ENCODE measurements at regions of chr14 and their contacts with region 1.

Region 1: DNA sequence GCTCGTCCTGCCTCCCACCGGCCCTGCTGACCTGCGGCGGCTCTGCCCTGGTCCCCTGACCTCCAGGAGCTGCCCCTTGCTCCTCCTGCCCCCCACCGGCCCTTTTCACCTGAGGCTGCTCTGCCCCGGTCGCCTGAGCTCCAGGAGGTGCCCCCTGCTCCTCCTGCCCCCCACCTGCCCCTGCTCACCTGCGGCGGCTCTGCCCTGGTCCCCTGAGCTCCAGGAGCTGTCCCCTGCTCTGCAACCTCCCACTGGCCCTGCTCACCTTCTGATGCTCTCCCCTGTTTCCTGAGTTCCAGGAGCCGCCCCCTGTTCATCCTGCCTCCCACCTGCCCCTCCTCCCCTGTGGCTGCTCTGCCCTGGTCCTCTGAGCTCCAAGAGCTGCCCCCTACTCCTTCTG is 101.3 kb downstream of the TMEM121 start:
- DNase-seq: peak in 1 of 14 experiments; percentile 6
- ATAC-seq: no peak
- H3K4me3 ChIP-seq: no peak overlapping the region
- H3K4me3 Mint-ChIP-seq: no peak overlapping the region
- H3K27ac ChIP-seq: no peak overlapping the region
- H3K27ac Mint-ChIP-seq: no peak overlapping the region
- H3K4me1 ChIP-seq: no peaks in the 10 kb centered on the region
- H3K4me1 Mint-ChIP-seq: no peaks in the 10 kb centered on the region
- H3K27me3 ChIP-seq: peaks cover 0 to 9% of the 10 kb centered on the region in 2 experiments
- H3K27me3 Mint-ChIP-seq: peaks cover 20% of the 10 kb centered on the region
- CTCF ChIP-seq: no peak

Region 2: DNA sequence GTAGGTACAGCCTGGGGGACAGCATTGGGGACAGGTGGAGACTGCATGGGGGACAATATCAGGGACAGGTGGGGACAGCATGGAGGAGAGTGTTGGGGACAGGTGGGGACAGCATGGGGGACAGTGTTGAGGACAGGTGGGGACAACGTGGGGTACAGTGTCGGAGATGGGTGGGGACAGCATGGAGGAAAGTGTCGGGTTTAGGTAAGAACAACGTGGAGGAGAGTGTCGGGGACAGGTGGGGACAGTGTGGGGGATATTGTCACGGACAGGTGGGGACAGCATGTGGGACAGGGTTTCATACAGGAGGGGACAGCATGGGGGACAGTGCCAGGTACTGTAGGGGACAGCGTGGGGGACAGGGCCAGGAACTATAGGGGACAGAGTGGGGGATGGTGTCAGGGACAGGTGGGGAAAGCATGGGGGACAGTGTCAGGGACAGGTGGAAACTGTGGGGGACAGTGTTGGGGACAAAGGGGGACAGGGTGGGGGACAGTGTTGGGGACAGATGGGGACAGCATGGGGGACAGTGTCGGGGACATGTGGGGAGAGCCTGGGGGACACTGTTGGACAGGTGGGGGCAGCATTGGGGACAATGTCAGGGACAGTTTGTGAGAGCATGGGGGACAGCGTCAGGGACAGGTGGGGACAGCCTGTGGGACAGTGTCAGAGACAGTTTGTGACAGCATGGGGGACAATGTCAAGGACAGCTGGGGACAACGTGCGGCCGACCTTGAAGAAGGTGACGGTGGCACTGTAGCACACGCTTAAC is 111.8 kb after region 1 on chr14:
- CTCF ChIA-PET with region 1: no interaction called
- POLR2A ChIA-PET with region 1: no interaction called
- intact Hi-C with region 1: loop called in 1 of 2 experiments (anchors 5 kb)
- DNase-seq: no peak
- ATAC-seq: no peak
- H3K4me3 ChIP-seq: no peak overlapping the region
- H3K4me3 Mint-ChIP-seq: no peak overlapping the region
- H3K27ac ChIP-seq: no peak overlapping the region
- H3K27ac Mint-ChIP-seq: no peak overlapping the region
- H3K4me1 ChIP-seq: no peaks in the 10 kb centered on the region
- H3K4me1 Mint-ChIP-seq: no peaks in the 10 kb centered on the region
- H3K27me3 ChIP-seq: no peaks in the 10 kb centered on the region
- H3K27me3 Mint-ChIP-seq: no peaks in the 10 kb centered on the region
- CTCF ChIP-seq: no peak

Measured in CD4-positive, alpha-beta T cell (primary cell).